Activated CD8-positive, alpha-beta memory T cell treated with anti-CD3 and anti-CD28 coated beads, Interleukin-2, amount 10 ng/mL, durations not matched to agents 7 days and 5 days (primary cell): ENCODE measurements at regions of chr3 and their contacts with region 1.

Region 1: DNA sequence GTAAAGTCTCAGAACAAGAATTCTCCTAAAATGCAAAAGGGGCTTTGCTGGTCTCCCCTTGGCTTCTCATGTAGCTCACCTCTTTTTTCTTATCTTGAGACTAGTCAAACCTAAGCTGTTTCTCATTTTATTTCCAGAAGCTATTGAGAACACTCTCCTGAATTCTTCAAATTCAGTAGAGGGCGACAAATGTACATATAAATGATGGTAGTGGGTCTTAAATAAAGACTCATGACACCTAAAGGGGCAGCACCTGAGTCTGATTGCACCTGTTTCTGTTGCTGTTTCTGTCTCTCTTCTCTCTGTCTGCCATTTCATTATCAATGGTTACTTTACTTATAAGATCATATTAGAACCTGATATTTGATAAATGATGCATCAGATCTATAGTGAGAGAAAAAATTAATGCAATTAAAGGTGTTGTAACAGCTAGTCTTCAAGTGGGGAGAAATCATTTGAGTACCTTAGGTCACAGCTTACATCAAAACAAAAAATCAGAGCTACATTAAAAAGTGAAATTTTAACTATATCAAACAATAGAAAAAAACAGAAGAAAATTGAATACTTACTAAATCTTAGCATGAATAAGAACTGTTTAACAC is 7.0 kb downstream of the ADIPOQ start:
- DNase-seq: no peak
- ATAC-seq: peak; percentile 90
- H3K4me3 Mint-ChIP-seq: no peak overlapping the region
- H3K27ac Mint-ChIP-seq: no peak overlapping the region
- H3K4me1 Mint-ChIP-seq: peaks cover 11% of the 10 kb centered on the region
- H3K27me3 Mint-ChIP-seq: peaks cover 14% of the 10 kb centered on the region

Region 2: GRCh38 chr3:186589121-186589520 is 260.4 kb before region 1 on chr3:
- CTCF ChIA-PET with region 1: no interaction called
- DNase-seq: no peak
- ATAC-seq: no peak
- H3K4me3 Mint-ChIP-seq: no peak overlapping the region
- H3K27ac Mint-ChIP-seq: no peak overlapping the region
- H3K4me1 Mint-ChIP-seq: peaks cover 20% of the 10 kb centered on the region
- H3K27me3 Mint-ChIP-seq: no peaks in the 10 kb centered on the region

Region 3: DNA sequence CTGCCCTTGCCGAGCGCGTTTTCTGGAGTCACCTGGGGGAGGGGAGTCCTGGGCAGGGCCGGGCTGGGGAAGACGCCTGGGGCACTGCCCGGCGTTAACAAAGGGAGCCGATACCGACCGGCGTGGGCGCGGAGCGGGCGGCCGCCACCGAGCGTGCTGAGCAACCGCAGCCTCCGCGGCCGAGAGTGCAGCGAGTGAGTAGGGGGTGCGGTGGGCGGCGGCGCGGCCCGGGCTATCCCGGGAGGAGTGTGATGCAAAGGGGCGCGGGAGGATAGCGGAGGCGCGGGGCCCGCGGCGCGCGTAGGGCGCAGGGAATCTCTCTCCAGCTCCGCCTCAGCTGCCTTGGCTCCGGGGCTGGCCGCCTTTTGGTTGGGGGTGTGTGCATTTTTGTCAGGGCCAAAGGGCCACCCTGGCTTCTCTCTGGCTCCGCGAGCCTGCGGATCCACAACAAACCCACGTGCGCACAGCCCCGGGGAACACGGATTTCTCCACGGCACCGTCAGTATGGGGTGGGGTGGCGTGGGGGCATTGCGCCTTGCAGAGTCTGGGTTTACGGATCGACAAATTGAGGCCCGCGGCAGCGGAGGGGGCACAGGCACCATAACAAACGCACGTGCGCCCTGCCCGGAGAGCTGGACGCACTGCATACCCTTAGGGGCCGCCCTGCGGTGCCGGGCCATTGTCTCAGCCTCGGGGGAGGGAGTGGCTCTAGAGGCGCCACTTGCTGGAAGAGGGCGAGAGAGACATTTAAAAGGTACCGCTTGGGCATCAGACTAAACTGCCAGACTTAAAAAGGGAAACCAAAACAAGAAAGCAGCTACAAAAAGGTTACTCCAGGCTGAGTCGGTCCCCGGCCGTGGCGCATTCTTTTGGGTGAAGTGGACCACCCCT is 81.4 kb after region 1 on chr3:
- CTCF ChIA-PET with region 1: interaction called, 35 read pairs
- DNase-seq: peak; percentile 81
- ATAC-seq: peak; percentile 72
- H3K4me3 Mint-ChIP-seq: peak overlapping the region; percentile 88
- H3K27ac Mint-ChIP-seq: peak overlapping the region; percentile 87
- H3K4me1 Mint-ChIP-seq: peaks cover 36% of the 10 kb centered on the region
- H3K27me3 Mint-ChIP-seq: no peaks in the 10 kb centered on the region

Region 4: DNA sequence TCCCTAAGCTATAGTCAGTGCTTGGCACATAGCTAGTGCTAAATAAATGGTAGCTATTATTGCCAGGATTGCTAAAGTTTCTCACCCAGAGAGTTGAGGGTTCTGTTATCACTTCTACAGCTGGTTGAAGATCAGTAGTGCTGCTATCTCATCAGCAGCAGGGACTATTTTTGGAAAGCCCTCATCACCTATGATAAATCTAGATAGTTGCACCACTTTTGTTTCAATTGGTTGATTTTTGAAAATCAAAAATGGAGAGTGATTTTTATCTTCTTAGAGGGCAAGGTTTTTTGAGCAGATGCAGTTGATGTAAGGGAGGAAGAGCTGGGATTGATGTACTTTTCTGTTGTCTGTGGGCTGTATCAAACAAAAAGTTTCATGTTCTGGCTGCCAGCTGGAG is 182.5 kb after region 1 on chr3:
- CTCF ChIA-PET with region 1: interaction called, 11 read pairs
- DNase-seq: no peak
- ATAC-seq: no peak
- H3K4me3 Mint-ChIP-seq: no peak overlapping the region
- H3K27ac Mint-ChIP-seq: peak overlapping the region; percentile 52
- H3K4me1 Mint-ChIP-seq: peaks cover 59% of the 10 kb centered on the region
- H3K27me3 Mint-ChIP-seq: no peaks in the 10 kb centered on the region

Region 5: GRCh38 chr3:187066228-187066995 is 216.9 kb after region 1 on chr3:
- CTCF ChIA-PET with region 1: interaction called, 11 read pairs
- DNase-seq: peak; percentile 65
- ATAC-seq: peak; percentile 80
- H3K4me3 Mint-ChIP-seq: no peak overlapping the region
- H3K27ac Mint-ChIP-seq: peak overlapping the region; percentile 51
- H3K4me1 Mint-ChIP-seq: peaks cover 38% of the 10 kb centered on the region
- H3K27me3 Mint-ChIP-seq: no peaks in the 10 kb centered on the region

Region 6: GRCh38 chr3:187150599-187150998 is 301.1 kb after region 1 on chr3:
- CTCF ChIA-PET with region 1: interaction called, 18 read pairs
- DNase-seq: peak; percentile 75
- ATAC-seq: peak; percentile 63
- H3K4me3 Mint-ChIP-seq: no peak overlapping the region
- H3K27ac Mint-ChIP-seq: no peak overlapping the region
- H3K4me1 Mint-ChIP-seq: no peaks in the 10 kb centered on the region
- H3K27me3 Mint-ChIP-seq: peaks cover 44% of the 10 kb centered on the region